AG04449 (cell line): ENCODE measurements at regions of chr9 and their contacts with region 1.

Region 1: GRCh38 chr9:129139993-129140396 is 28.8 kb downstream of the PTPA start:
- DNase-seq: peak; percentile 99
- H3K4me3 ChIP-seq: peak overlapping the region; percentile 50
- CTCF ChIP-seq: no peak

Region 2: DNA sequence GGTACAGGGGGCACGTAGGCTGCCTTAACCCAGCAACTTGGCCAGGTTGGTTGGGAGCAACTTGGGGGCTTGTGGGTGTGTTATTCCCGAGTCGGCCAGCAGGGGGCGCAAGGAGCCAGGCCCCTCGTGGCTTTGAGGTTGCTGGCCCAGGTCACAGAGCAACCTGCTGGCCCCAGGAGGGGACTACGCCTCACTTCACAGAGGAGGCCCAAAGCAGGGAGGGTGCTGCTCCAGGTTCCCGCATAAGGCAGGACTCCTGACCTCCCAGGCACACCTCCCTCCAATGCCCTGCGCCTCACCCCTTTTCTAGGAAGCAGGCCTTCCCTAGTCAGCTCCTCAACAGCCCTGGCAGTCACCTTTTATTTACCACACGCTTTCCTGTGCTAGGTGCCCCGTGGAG is 276.3 kb before region 1 on chr9:
- CTCF ChIA-PET with region 1: no interaction called
- POLR2A ChIA-PET with region 1: no interaction called
- DNase-seq: no peak
- H3K4me3 ChIP-seq: no peak overlapping the region
- CTCF ChIP-seq: peak; percentile 95

Region 3: DNA sequence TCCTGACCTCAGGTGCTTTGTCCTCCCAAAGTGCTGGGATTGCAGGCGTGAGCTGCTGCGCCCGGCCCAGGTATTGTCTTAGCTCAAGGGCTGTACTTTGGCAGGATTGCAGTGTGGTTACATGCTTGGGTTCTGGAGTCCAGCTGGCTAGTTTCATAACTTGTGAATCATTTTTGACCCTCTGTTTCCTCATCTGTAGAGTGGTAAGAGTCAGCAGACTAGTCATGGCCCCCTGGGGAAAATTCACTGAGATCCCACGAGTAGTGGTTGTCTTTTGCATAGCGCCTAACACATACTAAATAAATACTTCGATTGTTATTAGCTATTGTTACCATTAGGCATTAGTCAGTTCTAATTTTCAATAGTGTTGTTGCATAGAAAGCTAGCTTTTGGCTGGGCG is 14.5 kb before region 1 on chr9:
- CTCF ChIA-PET with region 1: interaction called, 100 read pairs
- POLR2A ChIA-PET with region 1: no interaction called
- DNase-seq: no peak
- H3K4me3 ChIP-seq: no peak overlapping the region
- CTCF ChIP-seq: no peak

Region 4: DNA sequence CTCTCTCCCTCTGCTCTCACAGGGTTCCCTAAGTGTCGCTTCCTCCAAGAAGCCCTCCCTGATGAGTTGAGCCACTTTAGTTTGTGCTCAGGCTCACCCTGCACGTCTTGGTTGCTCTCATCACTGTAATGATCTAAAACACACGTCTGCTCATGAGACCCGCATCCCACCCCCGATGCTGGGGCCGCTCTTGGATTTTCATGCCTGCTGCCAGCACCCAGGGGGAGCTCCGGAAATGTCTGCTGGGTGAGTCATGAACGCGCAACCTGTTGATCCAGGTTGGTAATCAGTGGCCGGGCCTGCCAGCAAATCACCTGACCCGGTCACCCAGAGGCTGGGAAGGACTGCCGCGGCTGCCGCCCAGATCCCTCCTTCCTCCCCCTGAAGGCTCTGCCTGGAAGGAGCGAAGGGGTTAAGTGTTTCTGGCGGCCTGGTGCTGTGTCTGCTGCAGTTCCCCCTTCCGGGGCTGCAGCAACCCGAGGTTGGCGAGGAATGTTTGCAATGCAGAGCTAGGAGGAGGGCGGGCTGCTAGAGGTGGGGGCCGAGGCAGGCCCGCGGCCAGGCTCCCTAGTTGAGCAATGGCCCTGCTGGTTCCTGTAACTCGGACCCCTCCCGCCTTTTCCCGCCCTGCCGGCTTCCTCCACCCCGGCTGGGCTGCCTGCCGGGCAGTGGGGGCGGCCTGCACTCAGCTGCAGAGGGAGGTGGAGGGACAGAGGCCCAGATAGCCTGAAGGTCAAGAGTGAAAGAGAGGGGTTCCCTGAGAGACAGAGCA is 194.1 kb after region 1 on chr9:
- CTCF ChIA-PET with region 1: interaction called, 11 read pairs
- POLR2A ChIA-PET with region 1: interaction called, 4 read pairs
- DNase-seq: peak; percentile 86
- H3K4me3 ChIP-seq: peak overlapping the region; percentile 15
- CTCF ChIP-seq: no peak

Region 5: DNA sequence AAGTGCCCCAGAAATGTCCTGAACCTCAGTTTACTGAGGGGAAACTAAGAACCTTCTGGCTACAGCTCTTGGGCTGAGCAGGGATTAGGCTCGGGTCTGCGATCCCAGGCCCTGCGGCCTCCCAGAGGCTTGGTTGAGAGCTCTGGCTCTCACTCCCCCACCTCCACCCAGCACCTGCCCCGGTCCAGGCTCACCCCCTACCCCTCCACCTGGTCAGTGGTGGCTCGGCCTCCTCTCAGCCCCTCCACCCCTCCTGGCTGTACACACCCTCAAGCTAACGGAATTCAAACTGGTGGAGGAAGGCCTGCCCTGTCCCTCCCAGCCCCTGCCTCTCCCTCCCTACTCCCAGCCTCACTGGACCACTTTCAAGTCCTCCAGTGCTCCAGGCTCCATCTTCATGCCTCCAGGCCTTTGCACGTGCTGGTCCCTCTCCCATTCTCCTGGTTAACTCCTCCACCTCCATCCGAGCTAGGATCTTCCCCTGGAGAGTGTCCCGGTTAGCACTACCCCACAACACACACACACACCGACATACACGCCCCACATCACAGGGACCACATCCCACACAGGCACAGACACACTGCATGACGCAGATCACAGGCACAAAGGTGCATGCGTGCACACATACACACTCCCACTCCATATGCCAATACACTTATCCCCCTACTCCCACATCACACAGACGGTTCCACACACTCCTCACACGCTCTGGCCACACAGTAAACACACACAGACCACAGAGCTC is 350.0 kb after region 1 on chr9:
- CTCF ChIA-PET with region 1: interaction called, 26 read pairs
- POLR2A ChIA-PET with region 1: interaction called, 33 read pairs
- DNase-seq: no peak
- H3K4me3 ChIP-seq: peak overlapping the region; percentile 52
- CTCF ChIP-seq: no peak

Region 6: DNA sequence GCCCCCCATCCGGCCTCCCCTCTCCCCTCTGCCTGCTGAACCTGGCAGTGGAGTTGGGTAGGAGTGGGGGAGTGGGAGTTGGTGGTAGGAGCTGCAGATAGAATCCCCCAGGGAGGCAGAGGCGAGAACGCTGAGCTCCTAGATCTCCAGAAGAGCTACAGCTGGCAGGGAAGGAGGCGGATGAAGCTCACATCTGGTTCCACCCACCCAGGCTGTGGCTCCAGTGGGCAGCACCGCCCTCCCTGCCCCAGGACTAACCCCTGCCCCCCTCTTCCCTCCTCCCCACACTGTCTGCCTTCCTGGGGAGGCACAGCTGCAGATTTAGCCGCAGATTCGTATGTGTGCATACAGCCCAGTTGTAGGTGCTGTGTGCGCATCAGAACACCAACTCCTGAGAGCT is 446.7 kb after region 1 on chr9:
- CTCF ChIA-PET with region 1: interaction called, 11 read pairs
- POLR2A ChIA-PET with region 1: interaction called, 3 read pairs
- DNase-seq: no peak
- H3K4me3 ChIP-seq: no peak overlapping the region
- CTCF ChIP-seq: no peak

Region 7: DNA sequence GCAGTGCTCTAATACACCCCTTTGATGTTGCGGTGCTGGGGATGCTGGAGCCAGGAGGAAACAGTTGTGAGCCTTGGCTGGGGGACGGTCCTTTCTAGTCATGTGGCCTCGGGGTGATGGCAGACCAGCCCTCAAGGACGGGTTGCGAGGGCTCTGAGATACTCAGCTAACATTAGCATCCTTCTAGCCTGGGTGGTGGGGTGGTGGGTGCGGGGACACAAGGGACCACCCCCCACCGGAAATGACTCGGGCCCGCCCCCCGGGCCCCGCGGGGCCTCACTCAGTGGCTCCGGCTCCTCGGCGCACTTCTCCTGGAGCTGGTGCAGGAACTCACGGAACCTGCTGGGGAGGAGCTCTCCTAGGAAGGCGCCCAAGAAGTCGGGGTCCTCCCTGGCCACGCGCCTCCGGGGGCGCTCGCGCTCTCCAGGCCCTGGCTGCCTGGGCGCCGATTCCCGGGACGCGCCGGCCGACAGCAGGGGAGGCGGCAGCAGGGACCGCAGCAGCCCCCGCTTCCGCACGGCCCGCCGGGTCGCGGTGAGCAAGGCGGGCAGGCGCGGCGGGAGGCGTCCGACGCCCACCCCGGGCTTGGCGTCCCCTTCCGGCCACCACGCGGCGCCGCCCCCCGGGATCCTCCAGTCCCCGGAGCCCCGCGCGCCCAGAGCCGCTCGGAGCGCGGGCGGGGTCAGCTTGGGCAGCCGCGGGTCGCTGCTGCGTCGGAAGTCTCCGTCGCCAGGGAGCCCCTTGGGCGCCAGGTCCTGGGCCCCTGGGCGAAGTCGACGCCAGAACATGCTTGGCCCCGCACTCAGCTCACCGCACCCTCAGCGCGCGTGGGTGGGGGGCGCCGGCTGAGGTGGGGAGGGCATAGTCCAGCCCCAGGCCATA is 480.0 kb after region 1 on chr9:
- CTCF ChIA-PET with region 1: interaction called, 735 read pairs
- POLR2A ChIA-PET with region 1: interaction called, 11 read pairs
- DNase-seq: no peak
- H3K4me3 ChIP-seq: peak overlapping the region; percentile 56
- CTCF ChIP-seq: peak; percentile 57